Caco-2 (cell line): ENCODE measurements at regions of chr10 and their contacts with region 1.

Region 1: DNA sequence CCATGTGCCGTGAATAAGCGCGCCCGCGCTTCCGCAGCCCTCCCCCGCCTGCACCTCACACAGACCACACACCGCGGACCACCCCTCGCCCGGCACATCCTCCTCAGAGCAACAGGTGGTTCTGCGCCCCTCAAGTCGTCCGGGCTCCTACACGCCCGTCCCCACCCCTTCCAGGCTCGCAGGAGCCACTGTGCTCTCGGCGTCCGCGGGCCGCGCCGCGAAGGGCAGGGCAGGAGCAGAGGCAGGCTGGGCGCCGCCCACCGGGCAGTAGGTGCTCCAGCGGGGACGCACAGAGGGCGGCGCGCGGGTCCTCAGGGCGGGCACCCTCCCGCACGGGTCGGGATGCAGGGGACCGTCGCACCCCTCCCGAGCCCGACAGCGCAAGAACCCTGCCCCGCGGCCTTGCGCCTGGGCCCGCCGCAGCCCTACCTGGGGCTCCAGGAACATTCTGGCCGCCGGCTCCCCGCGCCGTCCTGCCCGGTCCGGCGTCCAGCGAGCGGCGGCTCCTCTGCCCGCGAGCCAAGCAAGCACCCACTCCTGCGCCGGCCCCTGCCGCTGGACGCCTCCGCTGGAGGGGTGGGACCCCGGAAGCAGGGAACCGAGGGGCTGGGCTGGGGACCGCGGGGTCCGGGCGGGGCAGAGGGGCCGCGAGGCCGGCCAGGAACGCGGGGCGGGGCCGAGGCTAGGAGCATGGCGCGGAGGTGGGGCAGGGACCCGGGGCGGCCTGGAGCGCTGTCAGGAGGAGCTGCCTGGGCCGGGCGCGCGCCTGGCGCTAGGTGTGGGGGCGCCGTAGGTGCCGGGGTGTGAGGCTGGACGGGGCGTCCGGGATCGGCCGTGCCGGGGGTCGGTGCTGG is 37.4 kb downstream of the RASGEF1A start:
- DNase-seq: peak; percentile 40 to 67
- H3K4me3 ChIP-seq: peak overlapping the region; percentile 47
- H3K4me3 Mint-ChIP-seq: peak overlapping the region; percentile 54
- H3K27ac Mint-ChIP-seq: no peak overlapping the region
- H3K4me1 ChIP-seq: peaks cover 12% of the 10 kb centered on the region; the same call in 1 of the 2 replicates
- H3K4me1 Mint-ChIP-seq: no peaks in the 10 kb centered on the region
- H3K27me3 ChIP-seq: peaks cover 5% of the 10 kb centered on the region; the same call in 1 of the 2 replicates
- H3K27me3 Mint-ChIP-seq: peaks cover 26% of the 10 kb centered on the region
- CTCF ChIP-seq: no peak

Region 2: GRCh38 chr10:43024524-43024923 is 204.9 kb before region 1 on chr10:
- CTCF ChIA-PET with region 1: interaction called, 14 read pairs
- POLR2A ChIA-PET with region 1: no interaction called
- intact Hi-C with region 1: no loop called
- DNase-seq: no peak
- H3K4me3 ChIP-seq: no peak overlapping the region
- H3K4me3 Mint-ChIP-seq: no peak overlapping the region
- H3K27ac Mint-ChIP-seq: no peak overlapping the region
- H3K4me1 ChIP-seq: no peaks in the 10 kb centered on the region
- H3K4me1 Mint-ChIP-seq: no peaks in the 10 kb centered on the region
- H3K27me3 ChIP-seq: no peaks in the 10 kb centered on the region; the same call in 1 of the 2 replicates
- H3K27me3 Mint-ChIP-seq: peaks cover 23% of the 10 kb centered on the region
- CTCF ChIP-seq: no peak